ENCODE measurements at regions of chr4 and their contacts with region 1.

Region 1: GRCh38 chr4:88659055-88659889 is 38.4 kb downstream of the NAP1L5 start:
- DNase-seq: peak; percentile 68 to 70
- H3K4me3 ChIP-seq: no peak overlapping the region
- H3K27ac ChIP-seq: peak overlapping the region in 1 of 3 donors; percentile 25
- H3K4me1 ChIP-seq: peaks cover 0 to 3% of the 10 kb centered on the region in 2 donors
- H3K27me3 ChIP-seq: no peaks in the 10 kb centered on the region
- CTCF ChIP-seq: peak; percentile 65 to 91 (median 86)
- POLR2A ChIP-seq: no peak

Region 2: GRCh38 chr4:88526221-88526815 is 133.0 kb before region 1 on chr4:
- intact Hi-C with region 1: loop called (anchors 5 kb)
- DNase-seq: no peak
- H3K4me3 ChIP-seq: no peak overlapping the region
- H3K27ac ChIP-seq: peak overlapping the region in 1 of 3 donors; percentile 30
- H3K4me1 ChIP-seq: peaks cover 15 to 18% of the 10 kb centered on the region in 2 donors
- H3K27me3 ChIP-seq: no peaks in the 10 kb centered on the region
- CTCF ChIP-seq: peak in 3 of 6 experiments; percentile 37 to 54 (median 47)
- POLR2A ChIP-seq: no peak

Region 3: DNA sequence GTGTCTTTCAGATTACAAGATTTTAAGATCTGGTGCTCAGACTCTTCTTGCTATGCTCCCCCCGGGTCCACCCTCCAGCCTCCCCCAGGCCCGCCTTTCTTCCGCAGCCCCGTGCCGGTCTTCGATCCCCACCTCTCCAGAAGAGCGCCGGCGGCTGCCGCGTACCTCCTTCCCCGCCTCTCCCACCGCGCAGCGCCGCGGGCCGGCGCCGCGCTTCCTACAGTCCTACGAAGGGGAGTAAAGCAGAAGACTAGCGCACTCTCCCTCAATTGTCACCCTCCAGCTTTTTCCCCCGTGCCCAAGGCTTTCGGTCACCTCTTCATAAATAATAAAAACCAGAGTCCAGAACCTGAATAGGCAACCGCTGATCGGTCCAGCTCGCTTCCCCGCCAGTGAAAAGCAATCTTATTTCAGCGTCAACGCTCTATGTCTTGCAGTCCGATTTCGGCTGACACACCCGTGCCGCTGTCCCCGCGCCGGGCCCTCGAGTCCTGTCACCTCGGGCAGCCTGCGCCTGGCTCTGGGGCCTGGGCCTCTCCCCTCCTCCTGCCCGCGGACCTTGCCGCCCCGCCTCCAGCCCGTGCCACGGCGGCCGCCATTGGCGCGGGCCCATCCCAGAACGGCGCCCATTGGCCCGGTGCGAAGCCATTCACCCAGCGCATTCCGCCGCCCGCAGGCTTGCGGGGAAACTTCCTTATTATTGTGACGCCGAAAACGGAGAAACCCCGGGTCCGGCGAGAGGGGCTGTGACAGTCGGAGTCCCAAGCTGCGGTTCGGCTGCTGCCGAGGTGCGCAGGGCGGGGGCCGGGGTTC is 67.3 kb before region 1 on chr4 and contains the start of gene HERC3:
- intact Hi-C with region 1: loop called (anchors 10 kb)
- DNase-seq: peak; percentile 92 to 93
- H3K4me3 ChIP-seq: peak within 1 kb of the TSS; percentile 72 to 89 (median 82)
- H3K27ac ChIP-seq: peak within 1 kb of the TSS; percentile 70 to 95 (median 88)
- H3K4me1 ChIP-seq: peaks cover 5 to 7% of the 10 kb centered on the region in 2 donors
- H3K27me3 ChIP-seq: no peaks in the 10 kb centered on the region
- CTCF ChIP-seq: peak in 2 of 6 experiments; percentile 25 to 35
- POLR2A ChIP-seq: peak in 1 of 2 donors; percentile 90
- total RNA-seq, gene HERC3: 37.4 to 75.4 (median 47.8) TPM

Region 4: GRCh38 chr4:88613417-88613875 is 45.8 kb before region 1 on chr4:
- intact Hi-C with region 1: no loop called
- DNase-seq: no peak
- H3K4me3 ChIP-seq: no peak overlapping the region
- H3K27ac ChIP-seq: peak overlapping the region in 2 of 3 donors; percentile 46 to 55
- H3K4me1 ChIP-seq: peaks cover 42 to 56% of the 10 kb centered on the region in 2 donors
- H3K27me3 ChIP-seq: no peaks in the 10 kb centered on the region
- CTCF ChIP-seq: no peak
- POLR2A ChIP-seq: no peak

Measured in thyroid gland (tissue), 4 donors.